ENCODE measurements at regions of chr5 and their contacts with region 1.

Region 1: GRCh38 chr5:111158105-111158744 is 66.0 kb upstream of the CAMK4 start:
- DNase-seq: peak; percentile 42 to 77 (median 71)
- ATAC-seq: peak; percentile 88
- H3K4me3 ChIP-seq: no peak overlapping the region
- H3K27ac ChIP-seq: no peak overlapping the region
- H3K4me1 ChIP-seq: no peaks in the 10 kb centered on the region
- H3K27me3 ChIP-seq: no peaks in the 10 kb centered on the region; a peak in 1 of 5 replicates
- CTCF ChIP-seq: peak; percentile 80 to 96 (median 92)
- EP300 ChIP-seq: no peak
- POLR2A ChIP-seq: no peak
- RAD21 ChIP-seq: peak; percentile 89 to 90

Region 2: GRCh38 chr5:111278845-111279504 is 120.8 kb after region 1 on chr5:
- CTCF ChIA-PET with region 1: interaction called, 17 read pairs
- POLR2A ChIA-PET with region 1: no interaction called
- in situ Hi-C with region 1: no loop called
- intact Hi-C with region 1: loop called (anchors 1 kb)
- DNase-seq: peak; percentile 70 to 74 (median 72)
- ATAC-seq: peak; percentile 99
- H3K4me3 ChIP-seq: no peak overlapping the region
- H3K27ac ChIP-seq: no peak overlapping the region
- H3K4me1 ChIP-seq: no peaks in the 10 kb centered on the region
- H3K27me3 ChIP-seq: no peaks in the 10 kb centered on the region
- CTCF ChIP-seq: peak; percentile 75 to 81 (median 76)
- EP300 ChIP-seq: no peak
- POLR2A ChIP-seq: no peak
- RAD21 ChIP-seq: peak; percentile 67 to 79

Region 3: GRCh38 chr5:111461255-111461671 is 303.0 kb after region 1 on chr5:
- CTCF ChIA-PET with region 1: interaction called, 6 read pairs
- POLR2A ChIA-PET with region 1: no interaction called
- in situ Hi-C with region 1: no loop called
- intact Hi-C with region 1: loop called (anchors 5 kb)
- DNase-seq: peak in 2 of 4 experiments; percentile 16 to 21
- ATAC-seq: peak; percentile 88
- H3K4me3 ChIP-seq: no peak overlapping the region
- H3K27ac ChIP-seq: no peak overlapping the region
- H3K4me1 ChIP-seq: no peaks in the 10 kb centered on the region
- H3K27me3 ChIP-seq: peaks cover 0 to 8% of the 10 kb centered on the region in 2 experiments; a peak in 3 of 5 replicates
- CTCF ChIP-seq: peak; percentile 46 to 56 (median 49)
- EP300 ChIP-seq: no peak
- POLR2A ChIP-seq: no peak
- RAD21 ChIP-seq: peak; percentile 9 to 39; a peak in 2 of 4 replicates

Region 4: GRCh38 chr5:111550279-111551020 is 392.2 kb after region 1 on chr5:
- CTCF ChIA-PET with region 1: no interaction called
- POLR2A ChIA-PET with region 1: no interaction called
- in situ Hi-C with region 1: no loop called
- intact Hi-C with region 1: loop called (anchors 5 kb)
- DNase-seq: peak; percentile 59 to 82 (median 67)
- ATAC-seq: peak; percentile 96
- H3K4me3 ChIP-seq: no peak overlapping the region
- H3K27ac ChIP-seq: no peak overlapping the region
- H3K4me1 ChIP-seq: peaks cover 0 to 3% of the 10 kb centered on the region in 2 experiments; a peak in 1 of 5 replicates
- H3K27me3 ChIP-seq: peaks cover 3% of the 10 kb centered on the region in 2 experiments; a peak in 3 of 5 replicates
- CTCF ChIP-seq: peak; percentile 63 to 70 (median 69)
- EP300 ChIP-seq: no peak
- POLR2A ChIP-seq: no peak
- RAD21 ChIP-seq: peak; percentile 59 to 72